CD4-positive, alpha-beta T cell (primary cell): ENCODE measurements at regions of chr20 and their contacts with region 1.

Region 1: DNA sequence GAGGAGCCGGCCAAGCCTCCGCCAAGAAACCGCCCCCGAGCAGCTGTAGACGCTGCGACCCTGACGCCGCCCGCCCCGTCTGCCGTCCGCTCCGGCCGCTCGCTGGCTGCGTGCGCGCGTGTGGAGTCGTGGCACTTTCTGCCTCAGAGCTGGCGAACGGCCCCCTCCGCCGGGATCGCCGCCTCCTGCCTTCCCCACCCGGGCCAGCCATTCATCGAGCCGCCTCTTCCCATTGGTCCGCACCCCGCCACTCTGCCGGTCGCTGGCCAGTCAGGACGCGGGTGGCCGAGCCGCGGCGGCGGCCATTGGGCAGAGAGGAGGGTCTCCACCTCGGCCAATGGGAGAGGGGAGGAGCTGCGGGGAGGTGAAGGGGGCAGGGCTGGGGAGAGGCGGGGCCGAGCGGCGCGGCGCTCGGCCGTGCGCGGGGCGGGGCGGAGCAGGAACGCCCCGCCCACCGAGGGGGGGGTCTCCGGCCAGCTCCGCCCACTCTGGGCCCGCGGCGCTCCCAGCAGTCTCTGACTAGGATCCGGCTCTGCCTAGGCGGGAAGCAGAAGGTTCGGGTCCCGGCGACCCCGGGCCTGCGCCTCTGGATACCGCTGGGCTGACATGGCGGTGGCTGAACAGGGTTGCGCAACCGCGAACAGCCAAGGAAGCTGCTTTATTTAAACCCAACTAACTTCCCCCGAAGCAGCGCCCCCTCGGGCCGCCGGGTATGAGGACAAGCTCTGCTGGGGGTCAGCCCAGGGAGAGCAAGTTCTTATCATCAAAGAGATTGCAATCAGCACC is at the start of gene RRBP1:
- DNase-seq: peak; percentile 91 to 99 (median 95)
- ATAC-seq: peak; percentile 90
- H3K4me3 ChIP-seq: peak within 1 kb of the TSS; percentile 76
- H3K4me3 Mint-ChIP-seq: peak within 1 kb of the TSS; percentile 93
- H3K27ac ChIP-seq: peak within 1 kb of the TSS; percentile 53 to 56
- H3K27ac Mint-ChIP-seq: peak within 1 kb of the TSS; percentile 74
- H3K4me1 ChIP-seq: peaks cover 20% of the 10 kb centered on the region
- H3K4me1 Mint-ChIP-seq: peaks cover 26% of the 10 kb centered on the region
- H3K27me3 ChIP-seq: peaks cover 12 to 25% of the 10 kb centered on the region in 2 experiments
- H3K27me3 Mint-ChIP-seq: peaks cover 30% of the 10 kb centered on the region
- CTCF ChIP-seq: peak; percentile 89
- total RNA-seq, gene RRBP1: 26.4 to 27.2 TPM

Region 2: GRCh38 chr20:16729565-16730456 is 952.5 kb before region 1 on chr20 and contains the start of gene SNRPB2:
- CTCF ChIA-PET with region 1: no interaction called
- POLR2A ChIA-PET with region 1: no interaction called
- intact Hi-C with region 1: loop called in 1 of 2 experiments (anchors 5 kb)
- DNase-seq: peak; percentile 85 to 96 (median 88)
- ATAC-seq: peak; percentile 96
- H3K4me3 ChIP-seq: peak within 1 kb of the TSS; percentile 93
- H3K4me3 Mint-ChIP-seq: peak within 1 kb of the TSS; percentile 99
- H3K27ac ChIP-seq: peak within 1 kb of the TSS; percentile 81 to 92
- H3K27ac Mint-ChIP-seq: peak within 1 kb of the TSS; percentile 96
- H3K4me1 ChIP-seq: peaks cover 29% of the 10 kb centered on the region
- H3K4me1 Mint-ChIP-seq: peaks cover 57% of the 10 kb centered on the region
- H3K27me3 ChIP-seq: peaks cover 6 to 16% of the 10 kb centered on the region in 2 experiments
- H3K27me3 Mint-ChIP-seq: peaks cover 26% of the 10 kb centered on the region
- CTCF ChIP-seq: no peak
- total RNA-seq, gene SNRPB2: 49.6 to 50.4 TPM

Region 3: DNA sequence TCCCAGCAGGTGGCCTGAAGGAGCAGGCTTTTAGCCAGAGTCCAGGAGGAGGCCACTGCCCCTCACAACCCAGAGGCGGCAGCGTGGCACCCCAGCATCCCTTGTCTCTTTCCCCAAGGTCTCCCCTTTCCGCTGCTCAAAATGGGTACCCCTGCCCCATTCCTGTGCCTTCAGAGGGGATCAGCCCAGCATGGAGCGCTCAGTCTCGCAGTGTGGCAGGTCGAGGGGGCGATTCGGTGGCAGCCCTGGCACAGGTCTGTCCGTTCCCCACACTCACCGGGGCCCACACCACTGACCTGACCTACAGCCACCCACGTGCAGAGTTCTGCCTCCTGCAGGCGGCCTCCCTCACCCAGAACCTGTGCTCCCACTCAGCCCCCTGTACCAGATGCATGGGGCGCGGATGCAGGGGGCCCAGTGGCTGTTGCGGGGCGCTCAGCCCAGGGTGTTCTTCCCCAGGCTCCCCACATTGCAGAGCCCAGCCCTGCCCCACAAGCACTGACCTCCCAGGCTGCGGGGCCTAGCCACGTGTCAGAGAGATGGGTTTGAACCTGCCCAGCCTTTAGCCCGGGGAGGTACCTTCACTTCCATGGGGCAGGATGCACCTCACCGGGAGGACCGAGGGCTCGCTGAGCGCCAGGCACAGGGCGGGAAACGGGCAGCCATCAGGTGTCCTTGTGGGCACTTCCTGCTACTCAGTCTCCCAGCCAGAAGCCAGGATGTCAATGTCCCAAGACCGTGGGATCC is 70.6 kb before region 1 on chr20:
- CTCF ChIA-PET with region 1: interaction called, 8 read pairs
- POLR2A ChIA-PET with region 1: interaction called, 19 read pairs
- intact Hi-C with region 1: loop called in 1 of 2 experiments (anchors 5 kb)
- DNase-seq: peak in 2 of 14 experiments; percentile 34 to 41
- ATAC-seq: no peak
- H3K4me3 ChIP-seq: peak overlapping the region; percentile 38
- H3K4me3 Mint-ChIP-seq: peak overlapping the region; percentile 25
- H3K27ac ChIP-seq: peak overlapping the region; percentile 68 to 83
- H3K27ac Mint-ChIP-seq: peak overlapping the region; percentile 88
- H3K4me1 ChIP-seq: peaks cover 44% of the 10 kb centered on the region
- H3K4me1 Mint-ChIP-seq: peaks cover 44% of the 10 kb centered on the region
- H3K27me3 ChIP-seq: no peaks in the 10 kb centered on the region
- H3K27me3 Mint-ChIP-seq: no peaks in the 10 kb centered on the region
- CTCF ChIP-seq: peak; percentile 35

Region 4: GRCh38 chr20:17898548-17898994 is 216.3 kb after region 1 on chr20:
- CTCF ChIA-PET with region 1: no interaction called
- POLR2A ChIA-PET with region 1: interaction called, 6 read pairs
- intact Hi-C with region 1: loop called (anchors 1 kb)
- DNase-seq: peak; percentile 39 to 80 (median 54)
- ATAC-seq: peak; percentile 89
- H3K4me3 ChIP-seq: no peak overlapping the region
- H3K4me3 Mint-ChIP-seq: no peak overlapping the region
- H3K27ac ChIP-seq: no peak overlapping the region
- H3K27ac Mint-ChIP-seq: no peak overlapping the region
- H3K4me1 ChIP-seq: peaks cover 10% of the 10 kb centered on the region
- H3K4me1 Mint-ChIP-seq: peaks cover 11% of the 10 kb centered on the region
- H3K27me3 ChIP-seq: peaks cover 0 to 10% of the 10 kb centered on the region in 2 experiments
- H3K27me3 Mint-ChIP-seq: peaks cover 27% of the 10 kb centered on the region
- CTCF ChIP-seq: peak; percentile 95

Region 5: DNA sequence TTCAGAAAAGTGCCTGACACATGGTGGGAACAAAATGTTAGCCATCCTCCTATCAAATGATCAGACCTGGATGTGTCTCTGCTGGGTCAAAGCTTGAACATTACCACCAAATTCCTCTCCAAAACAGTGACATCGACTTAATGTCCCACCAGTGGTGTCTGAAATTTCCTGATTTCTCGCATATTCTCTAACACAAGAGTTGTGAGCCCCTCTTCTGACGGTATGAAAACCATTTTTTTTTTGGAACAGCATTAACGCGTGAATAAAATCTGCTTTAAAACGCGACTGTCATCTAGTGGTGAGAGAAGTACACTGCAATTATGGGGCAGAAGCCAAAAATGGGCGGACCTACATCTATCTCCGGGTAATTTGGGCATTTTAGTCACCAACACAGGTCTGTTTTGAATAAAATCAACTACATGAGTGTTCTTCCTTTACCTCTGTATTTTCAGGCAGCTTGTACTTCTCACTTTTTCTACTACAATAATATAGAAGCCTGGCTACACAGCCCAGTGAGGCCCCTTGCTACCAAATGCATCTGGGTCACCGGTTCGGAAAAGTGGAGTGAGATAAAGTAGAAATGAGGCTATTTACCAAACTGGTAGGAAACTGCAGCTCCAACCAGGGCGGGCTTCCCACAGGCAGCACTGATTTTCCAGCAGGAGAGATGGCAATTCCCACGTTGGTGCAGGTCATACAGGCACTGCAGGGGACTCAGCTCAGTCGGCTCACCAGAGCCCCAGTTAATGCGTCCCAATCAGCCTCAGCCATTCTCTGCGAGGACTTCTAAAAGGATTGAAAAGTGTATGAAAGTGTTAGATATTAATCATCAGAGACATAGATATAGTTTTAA is 313.9 kb after region 1 on chr20:
- CTCF ChIA-PET with region 1: interaction called, 7 read pairs
- POLR2A ChIA-PET with region 1: no interaction called
- intact Hi-C with region 1: loop called (anchors 1 kb)
- DNase-seq: peak in 11 of 14 experiments; percentile 8 to 80 (median 22)
- ATAC-seq: peak; percentile 97
- H3K4me3 ChIP-seq: no peak overlapping the region
- H3K4me3 Mint-ChIP-seq: no peak overlapping the region
- H3K27ac ChIP-seq: no peak overlapping the region
- H3K27ac Mint-ChIP-seq: no peak overlapping the region
- H3K4me1 ChIP-seq: peaks cover 7% of the 10 kb centered on the region
- H3K4me1 Mint-ChIP-seq: peaks cover 22% of the 10 kb centered on the region
- H3K27me3 ChIP-seq: peaks cover 0 to 2% of the 10 kb centered on the region in 2 experiments
- H3K27me3 Mint-ChIP-seq: no peaks in the 10 kb centered on the region
- CTCF ChIP-seq: peak; percentile 88

Region 6: DNA sequence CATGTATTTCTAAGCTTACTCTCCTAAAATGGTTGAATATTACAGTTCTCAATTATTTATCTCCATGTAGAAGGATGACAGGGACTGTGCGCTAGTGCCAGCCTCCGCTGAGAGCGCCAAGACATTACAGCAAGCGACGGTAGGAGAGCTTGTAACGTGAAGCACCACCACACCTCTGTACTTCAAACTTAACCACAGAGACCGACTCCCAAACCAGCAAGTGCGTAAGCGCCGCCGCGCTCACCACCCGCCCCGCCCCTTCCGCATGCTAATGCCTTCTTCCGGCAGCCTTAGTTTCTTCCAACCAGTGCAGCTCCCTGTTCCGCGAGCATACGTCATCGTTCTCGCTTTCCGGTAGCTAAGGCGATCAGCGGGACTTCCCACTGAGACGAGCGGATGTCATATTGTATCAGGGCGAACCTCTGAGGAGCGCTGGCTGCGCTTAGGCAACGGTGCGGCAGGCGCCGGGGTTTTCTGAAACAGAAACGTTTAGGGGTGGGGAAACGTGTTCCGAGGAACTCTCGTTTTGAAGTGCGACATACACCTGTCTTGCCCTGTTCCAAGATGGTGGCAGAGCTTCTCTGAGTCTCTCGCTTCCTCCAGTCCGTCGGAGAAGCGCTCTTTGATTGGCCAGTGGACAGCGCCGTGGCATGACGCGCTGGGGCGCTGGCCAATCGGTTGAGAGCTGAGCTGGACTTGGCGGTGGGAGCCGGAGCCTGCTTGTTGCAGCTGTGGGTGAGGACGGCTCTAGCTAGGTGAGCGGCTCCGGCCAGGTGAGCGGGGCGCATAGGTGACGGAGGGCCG is 825.1 kb after region 1 on chr20 and contains the start of gene SEC23B:
- CTCF ChIA-PET with region 1: no interaction called
- POLR2A ChIA-PET with region 1: interaction called, 12 read pairs
- intact Hi-C with region 1: loop called in 1 of 2 experiments (anchors 10 kb)
- DNase-seq: peak; percentile 94 to 99 (median 98)
- ATAC-seq: peak; percentile 81
- H3K4me3 ChIP-seq: peak within 1 kb of the TSS; percentile 86
- H3K4me3 Mint-ChIP-seq: peak within 1 kb of the TSS; percentile 98
- H3K27ac ChIP-seq: peak within 1 kb of the TSS; percentile 94 to 99
- H3K27ac Mint-ChIP-seq: peak within 1 kb of the TSS; percentile 100
- H3K4me1 ChIP-seq: peaks cover 26% of the 10 kb centered on the region
- H3K4me1 Mint-ChIP-seq: peaks cover 52% of the 10 kb centered on the region
- H3K27me3 ChIP-seq: peaks cover 0 to 2% of the 10 kb centered on the region in 2 experiments
- H3K27me3 Mint-ChIP-seq: no peaks in the 10 kb centered on the region
- CTCF ChIP-seq: no peak
- total RNA-seq, gene SEC23B: 29.2 to 32.8 TPM